ENCODE measurements at regions of chr6 and their contacts with region 1.

Region 1: GRCh38 chr6:11317885-11318771 is 85.7 kb upstream of the NEDD9 start:
- DNase-seq: no peak
- ATAC-seq: peak; percentile 89
- H3K4me3 Mint-ChIP-seq: peak overlapping the region; percentile 12
- H3K27ac Mint-ChIP-seq: peak overlapping the region; percentile 76
- H3K4me1 Mint-ChIP-seq: peaks cover 24% of the 10 kb centered on the region
- H3K27me3 Mint-ChIP-seq: no peaks in the 10 kb centered on the region
- CTCF ChIP-seq: no peak

Region 2: GRCh38 chr6:12957321-12958051 is 1639.4 kb after region 1 on chr6:
- CTCF ChIA-PET with region 1: no interaction called
- POLR2A ChIA-PET with region 1: interaction called, 11 read pairs
- intact Hi-C with region 1: no loop called
- DNase-seq: peak; percentile 30
- ATAC-seq: peak; percentile 69
- H3K4me3 Mint-ChIP-seq: peak overlapping the region; percentile 89
- H3K27ac Mint-ChIP-seq: no peak overlapping the region
- H3K4me1 Mint-ChIP-seq: peaks cover 21% of the 10 kb centered on the region
- H3K27me3 Mint-ChIP-seq: peaks cover 35% of the 10 kb centered on the region
- CTCF ChIP-seq: no peak